Mammary epithelial cell (primary cell): ENCODE measurements at regions of chr19 and their contacts with region 1.

Region 1: DNA sequence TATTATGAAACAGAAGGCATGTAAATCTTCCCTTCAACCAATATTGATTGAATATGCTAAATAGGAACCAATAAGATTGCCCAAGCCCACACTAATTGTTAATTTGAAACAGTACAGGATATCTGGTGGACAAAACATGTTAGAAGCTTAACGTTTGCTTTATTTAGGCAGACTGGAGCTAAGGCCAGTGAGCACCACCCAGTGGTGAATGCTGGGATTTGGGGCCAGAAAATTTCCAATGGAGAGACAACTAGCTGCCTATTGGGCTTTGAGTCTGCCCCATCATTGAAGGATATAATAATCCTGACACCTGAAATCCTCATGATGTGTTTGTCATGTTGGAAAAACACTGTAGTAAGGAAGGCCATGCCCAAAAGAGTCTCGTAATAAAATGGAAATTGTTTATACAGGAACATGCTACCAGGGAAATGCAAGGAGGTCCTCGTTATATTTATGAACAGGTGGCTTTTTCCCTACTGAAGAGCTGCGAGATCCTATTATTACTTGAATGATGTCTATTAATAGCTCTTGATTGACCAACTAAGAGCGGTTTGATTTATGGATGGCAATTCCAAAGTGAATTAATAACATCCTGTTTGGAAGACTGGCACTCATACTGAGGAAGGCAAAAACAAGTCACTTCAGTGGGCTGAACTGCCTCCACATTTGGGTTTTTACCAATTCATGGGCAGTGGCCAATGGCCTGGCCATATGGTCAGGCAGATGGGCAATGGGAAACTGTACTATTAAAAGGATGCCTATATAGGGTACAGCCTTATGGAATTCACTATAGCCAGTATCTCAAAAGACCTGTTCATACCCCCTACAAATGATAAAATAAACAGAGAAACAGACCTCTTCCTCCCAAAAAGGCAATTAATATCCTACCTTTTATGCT is 8.7 kb downstream of the SIGLECL1 start:
- DNase-seq: peak; percentile 24
- H3K4me3 ChIP-seq: no peak overlapping the region
- H3K27ac ChIP-seq: no peak overlapping the region
- H3K4me1 ChIP-seq: no peaks in the 10 kb centered on the region
- H3K27me3 ChIP-seq: no peaks in the 10 kb centered on the region
- CTCF ChIP-seq: peak; percentile 80 to 83

Region 2: GRCh38 chr19:50556282-50557008 is 703.2 kb before region 1 on chr19:
- CTCF ChIA-PET with region 1: no interaction called
- dilution Hi-C with region 1: no loop called
- in situ Hi-C with region 1: no loop called
- intact Hi-C with region 1: no loop called
- DNase-seq: peak; percentile 16
- H3K4me3 ChIP-seq: peak overlapping the region in 2 of 3 experiments; percentile 35
- H3K27ac ChIP-seq: no peak overlapping the region
- H3K4me1 ChIP-seq: peaks cover 4% of the 10 kb centered on the region
- H3K27me3 ChIP-seq: peaks cover 3% of the 10 kb centered on the region
- CTCF ChIP-seq: peak; percentile 66 to 78

Region 3: DNA sequence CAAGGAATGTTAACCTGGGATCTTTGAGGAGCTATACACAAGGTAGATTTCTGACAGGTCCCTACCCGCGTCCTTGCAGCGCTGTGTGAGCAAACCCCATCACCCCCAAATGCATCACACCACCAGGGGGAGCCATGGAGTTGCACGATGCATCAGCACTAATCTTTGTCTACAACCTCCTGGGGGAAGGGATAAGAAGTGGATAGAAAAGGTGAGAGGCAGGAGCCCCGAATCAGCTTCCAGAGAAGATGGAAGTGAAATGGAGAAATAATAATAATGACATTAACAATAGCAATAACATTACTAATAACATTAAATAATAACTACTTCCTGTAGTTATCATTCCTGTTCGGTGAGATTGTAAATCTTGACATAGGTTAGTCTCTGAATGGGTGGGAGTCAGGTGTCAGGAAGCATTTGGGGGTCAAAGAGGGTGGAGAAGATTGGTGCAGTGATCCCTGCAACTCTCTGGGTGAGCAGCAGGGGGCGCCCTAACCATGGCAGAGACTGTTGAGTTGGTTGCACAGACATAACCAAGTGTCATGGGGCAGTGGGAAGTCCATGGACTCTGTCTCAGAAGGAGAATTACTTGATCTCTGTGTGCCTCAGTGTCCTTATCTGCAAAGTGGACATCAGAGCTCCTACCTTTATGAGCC is 101.0 kb before region 1 on chr19:
- CTCF ChIA-PET with region 1: no interaction called
- dilution Hi-C with region 1: no loop called
- in situ Hi-C with region 1: no loop called
- intact Hi-C with region 1: loop called (anchors 1 kb)
- DNase-seq: peak; percentile 37
- H3K4me3 ChIP-seq: no peak overlapping the region
- H3K27ac ChIP-seq: no peak overlapping the region
- H3K4me1 ChIP-seq: no peaks in the 10 kb centered on the region
- H3K27me3 ChIP-seq: no peaks in the 10 kb centered on the region
- CTCF ChIP-seq: peak; percentile 86 to 93

Region 4: GRCh38 chr19:51210191-51210784 is 49.3 kb before region 1 on chr19:
- CTCF ChIA-PET with region 1: no interaction called
- dilution Hi-C with region 1: loop called (anchors 5 kb)
- in situ Hi-C with region 1: no loop called
- intact Hi-C with region 1: no loop called
- DNase-seq: no peak
- H3K4me3 ChIP-seq: no peak overlapping the region
- H3K27ac ChIP-seq: no peak overlapping the region
- H3K4me1 ChIP-seq: no peaks in the 10 kb centered on the region
- H3K27me3 ChIP-seq: no peaks in the 10 kb centered on the region
- CTCF ChIP-seq: no peak